ENCODE measurements at regions of chr2 and their contacts with region 1.

Region 1: DNA sequence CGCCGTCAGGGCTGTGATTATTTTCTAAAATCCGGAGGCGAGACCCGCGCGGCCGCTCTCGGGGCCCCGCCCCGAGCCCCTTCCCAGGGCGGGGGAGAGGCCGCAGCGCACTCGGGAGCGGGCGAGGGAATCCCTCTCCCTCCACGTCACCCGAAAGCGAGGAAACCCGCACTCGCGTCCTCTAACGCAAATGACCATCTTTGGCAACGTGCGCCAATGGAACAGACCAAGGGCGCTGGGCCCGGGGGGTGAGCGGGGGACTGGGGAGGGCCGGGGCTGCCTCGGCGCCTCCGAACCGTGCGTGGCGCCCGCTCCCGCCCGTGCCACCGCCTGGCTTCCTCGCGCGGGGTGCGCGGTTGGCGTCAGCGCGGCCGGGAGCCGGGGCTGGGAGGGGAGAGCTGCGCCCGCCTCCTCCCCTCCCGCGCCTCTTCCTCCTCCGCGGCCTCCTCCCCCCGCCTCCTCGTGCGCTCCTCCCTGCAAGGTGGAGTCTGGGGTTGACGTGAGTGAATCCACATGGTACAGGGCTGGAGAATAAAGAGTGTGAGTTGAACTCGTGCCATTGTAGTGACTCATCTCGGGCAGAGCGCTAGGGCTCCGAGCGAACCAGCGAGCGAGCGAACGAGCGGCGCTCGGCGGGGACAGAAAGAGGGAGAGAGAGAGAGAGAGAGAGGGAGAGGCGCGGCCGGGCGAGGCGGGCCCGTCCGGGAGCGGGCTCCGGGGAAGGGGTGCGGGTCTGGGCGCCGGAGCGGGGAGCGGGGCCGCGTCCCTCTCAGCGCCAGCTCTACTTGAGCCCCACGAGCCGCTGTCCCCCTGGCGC is at the start of gene FOSL2:
- DNase-seq: peak; percentile 99
- H3K4me3 Mint-ChIP-seq: no peak within 1 kb of the TSS
- H3K27ac Mint-ChIP-seq: no peak within 1 kb of the TSS
- H3K4me1 Mint-ChIP-seq: peaks cover 18% of the 10 kb centered on the region
- H3K27me3 Mint-ChIP-seq: no peaks in the 10 kb centered on the region
- CTCF ChIP-seq: no peak
- total RNA-seq, gene FOSL2: 122 and 141 TPM in 2 replicates

Region 2: DNA sequence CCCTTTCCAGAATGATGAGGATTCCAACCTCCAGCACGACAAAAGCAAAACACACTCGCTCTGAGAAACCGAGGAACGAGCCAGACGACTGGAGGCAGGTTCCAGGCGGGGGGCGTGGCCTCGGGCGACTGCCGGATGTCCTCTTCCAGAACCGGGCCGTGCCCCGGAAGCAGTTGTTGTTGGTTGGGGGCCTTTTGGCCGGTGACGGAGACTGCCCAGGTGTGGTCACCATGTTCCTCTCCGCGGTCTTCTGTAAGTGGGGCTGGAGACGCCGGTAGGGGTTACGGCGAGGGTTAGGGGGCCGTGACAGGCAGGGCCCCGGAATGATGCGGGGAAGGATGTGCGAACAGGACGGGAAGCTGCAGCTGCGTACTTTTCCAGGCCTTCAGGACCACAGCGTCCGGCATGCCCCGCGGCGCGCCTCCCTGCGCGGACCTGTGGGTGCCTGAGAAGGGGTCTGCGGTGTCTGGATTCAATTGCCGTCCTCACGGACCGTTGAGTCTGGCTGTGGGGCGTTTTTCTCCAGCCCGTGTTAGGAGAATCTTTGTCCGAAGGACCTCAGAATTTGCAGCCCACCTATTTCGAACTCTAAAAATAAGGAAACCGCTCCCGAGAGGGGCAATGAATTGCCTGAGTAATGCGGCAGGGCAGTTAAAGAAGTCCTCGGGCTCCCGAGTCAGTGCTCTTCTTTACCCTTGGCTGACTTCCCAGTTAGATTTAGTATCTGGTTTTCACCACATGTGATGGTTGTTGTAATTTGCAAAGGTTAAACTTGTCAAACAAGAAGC is 620.8 kb before region 1 on chr2 and contains the start of gene MRPL33:
- CTCF ChIA-PET with region 1: interaction called, 4 read pairs
- POLR2A ChIA-PET with region 1: interaction called, 20 read pairs
- intact Hi-C with region 1: loop called (anchors 5 kb)
- DNase-seq: peak; percentile 88
- H3K4me3 Mint-ChIP-seq: peak within 1 kb of the TSS; percentile 98
- H3K27ac Mint-ChIP-seq: peak within 1 kb of the TSS; percentile 95
- H3K4me1 Mint-ChIP-seq: peaks cover 40% of the 10 kb centered on the region
- H3K27me3 Mint-ChIP-seq: no peaks in the 10 kb centered on the region
- CTCF ChIP-seq: no peak
- total RNA-seq, gene MRPL33: 204 and 233 TPM in 2 replicates

Region 3: GRCh38 chr2:28080911-28081310 is 311.6 kb before region 1 on chr2:
- CTCF ChIA-PET with region 1: no interaction called
- POLR2A ChIA-PET with region 1: interaction called, 3 read pairs
- intact Hi-C with region 1: loop called (anchors 10 kb)
- DNase-seq: peak; percentile 59
- H3K4me3 Mint-ChIP-seq: no peak overlapping the region
- H3K27ac Mint-ChIP-seq: peak overlapping the region; percentile 74
- H3K4me1 Mint-ChIP-seq: peaks cover 8% of the 10 kb centered on the region
- H3K27me3 Mint-ChIP-seq: no peaks in the 10 kb centered on the region
- CTCF ChIP-seq: no peak

Region 4: DNA sequence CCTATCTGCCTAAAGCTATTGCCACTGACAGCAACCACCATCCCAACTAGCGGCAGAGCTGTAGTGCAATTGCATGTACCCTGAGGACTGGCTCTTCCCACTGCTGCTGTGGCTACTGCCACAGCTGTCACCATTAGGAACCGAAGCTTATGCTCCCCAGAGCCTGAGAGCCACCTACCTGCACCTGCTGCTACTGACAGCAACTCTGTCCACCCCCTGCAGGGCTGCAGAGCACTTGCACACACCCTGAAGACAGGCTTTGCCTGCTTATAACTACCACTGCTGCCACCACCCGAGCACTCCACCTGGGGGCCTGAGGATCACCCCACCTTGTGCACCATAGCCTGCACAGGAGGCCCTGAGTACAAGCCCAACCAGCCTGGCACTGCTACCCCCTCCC is 217.5 kb before region 1 on chr2:
- CTCF ChIA-PET with region 1: interaction called, 3 read pairs
- POLR2A ChIA-PET with region 1: interaction called, 13 read pairs
- intact Hi-C with region 1: no loop called
- DNase-seq: no peak
- H3K4me3 Mint-ChIP-seq: no peak overlapping the region
- H3K27ac Mint-ChIP-seq: no peak overlapping the region
- H3K4me1 Mint-ChIP-seq: peaks cover 17% of the 10 kb centered on the region
- H3K27me3 Mint-ChIP-seq: no peaks in the 10 kb centered on the region
- CTCF ChIP-seq: no peak

Region 5: DNA sequence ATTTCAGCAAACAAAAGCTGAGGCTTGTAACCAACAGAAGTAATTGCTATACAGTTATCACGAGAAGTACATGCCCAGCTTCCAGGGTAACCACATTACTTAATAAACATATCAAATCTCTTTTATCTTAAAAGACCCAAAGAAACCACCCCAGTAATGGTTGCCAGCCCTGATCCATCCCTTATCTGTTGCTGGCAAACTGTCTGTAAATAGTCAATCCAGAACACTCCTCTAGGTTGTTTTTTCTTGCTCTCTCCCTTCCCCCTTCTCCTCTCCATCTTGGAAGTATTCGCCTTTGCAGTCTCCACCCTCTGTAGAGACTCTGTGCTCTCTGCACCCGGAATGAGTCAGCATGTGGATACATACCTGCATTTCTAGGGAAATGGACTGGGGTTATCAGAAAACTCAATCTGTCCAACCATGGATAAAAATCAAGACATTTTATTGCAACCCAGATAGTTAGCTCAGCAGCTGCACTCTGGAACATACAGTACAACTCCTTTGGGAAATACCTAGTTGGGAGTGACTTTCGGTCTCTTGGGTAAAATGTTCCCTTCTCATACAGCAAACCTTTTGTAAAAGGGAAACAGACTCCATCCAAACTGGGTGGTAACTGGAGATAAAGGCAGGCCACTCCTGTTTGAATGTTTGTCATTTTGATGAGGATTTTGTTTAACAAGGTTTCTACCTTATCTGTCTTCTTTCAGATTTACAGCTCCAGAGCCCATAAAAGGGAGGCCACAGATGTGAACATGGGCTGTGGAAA is 123.3 kb before region 1 on chr2:
- CTCF ChIA-PET with region 1: no interaction called
- POLR2A ChIA-PET with region 1: interaction called, 277 read pairs
- intact Hi-C with region 1: loop called (anchors 2 kb)
- DNase-seq: peak; percentile 70
- H3K4me3 Mint-ChIP-seq: peak overlapping the region; percentile 60
- H3K27ac Mint-ChIP-seq: peak overlapping the region; percentile 90
- H3K4me1 Mint-ChIP-seq: peaks cover 45% of the 10 kb centered on the region
- H3K27me3 Mint-ChIP-seq: no peaks in the 10 kb centered on the region
- CTCF ChIP-seq: no peak

Region 6: GRCh38 chr2:28377984-28378678 is 14.4 kb before region 1 on chr2:
- CTCF ChIA-PET with region 1: interaction called, 44 read pairs
- POLR2A ChIA-PET with region 1: interaction called, 295 read pairs
- intact Hi-C with region 1: no loop called
- DNase-seq: peak; percentile 93
- H3K4me3 Mint-ChIP-seq: peak overlapping the region; percentile 61
- H3K27ac Mint-ChIP-seq: peak overlapping the region; percentile 70
- H3K4me1 Mint-ChIP-seq: peaks cover 29% of the 10 kb centered on the region
- H3K27me3 Mint-ChIP-seq: no peaks in the 10 kb centered on the region
- CTCF ChIP-seq: no peak

Region 7: DNA sequence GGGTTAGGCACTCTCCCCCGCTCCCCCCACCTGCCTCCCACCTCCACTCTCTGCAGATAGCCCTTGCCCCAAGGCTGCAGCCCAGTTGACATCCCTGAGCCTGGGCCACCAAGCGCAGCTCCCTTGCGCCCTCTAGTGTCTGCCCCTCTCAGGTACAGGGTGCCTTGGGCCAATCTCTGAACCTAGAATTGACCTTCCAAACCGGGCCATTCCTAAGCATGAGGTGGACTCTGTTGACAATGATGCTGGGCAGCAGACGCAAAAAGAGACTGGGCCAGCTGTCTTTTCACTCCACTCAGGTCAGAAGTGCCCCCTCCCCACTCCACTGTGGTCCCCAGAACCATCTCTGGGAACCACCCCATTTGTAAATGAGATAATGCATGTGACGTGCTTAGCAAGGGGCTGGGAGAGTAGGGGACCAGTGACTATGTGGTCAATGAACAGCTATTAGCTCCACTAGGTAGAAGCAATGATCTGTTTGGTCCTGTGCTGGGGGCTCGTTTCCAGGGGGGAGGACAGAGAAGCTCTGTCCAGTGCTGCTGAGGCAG is 60.1 kb after region 1 on chr2:
- CTCF ChIA-PET with region 1: no interaction called
- POLR2A ChIA-PET with region 1: interaction called, 26 read pairs
- intact Hi-C with region 1: loop called (anchors 1 kb)
- DNase-seq: peak; percentile 68
- H3K4me3 Mint-ChIP-seq: no peak overlapping the region
- H3K27ac Mint-ChIP-seq: no peak overlapping the region
- H3K4me1 Mint-ChIP-seq: peaks cover 31% of the 10 kb centered on the region
- H3K27me3 Mint-ChIP-seq: no peaks in the 10 kb centered on the region
- CTCF ChIP-seq: peak; percentile 94